ENCODE measurements at regions of chr6 and their contacts with region 1.

Region 1: DNA sequence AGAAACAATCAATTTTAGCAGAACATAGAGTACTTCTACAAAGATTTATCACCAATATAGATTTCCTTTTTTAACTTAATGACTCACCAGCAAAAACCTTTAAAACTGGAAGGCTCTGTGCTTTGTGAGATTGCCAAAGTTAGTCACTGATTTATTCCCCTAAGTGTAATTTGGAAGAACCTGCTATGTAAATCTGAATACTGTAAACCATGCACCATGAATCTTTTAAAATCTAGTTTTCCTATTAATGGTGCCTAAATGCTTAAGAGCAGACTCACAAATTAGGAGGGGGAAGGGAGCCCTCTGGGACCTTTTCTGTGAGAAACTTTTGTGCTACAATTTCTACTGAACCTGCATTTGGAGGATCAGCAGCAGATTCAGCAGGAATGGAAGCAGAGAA is 57.8 kb upstream of the PNRC1 start:
- DNase-seq: no peak

Region 2: DNA sequence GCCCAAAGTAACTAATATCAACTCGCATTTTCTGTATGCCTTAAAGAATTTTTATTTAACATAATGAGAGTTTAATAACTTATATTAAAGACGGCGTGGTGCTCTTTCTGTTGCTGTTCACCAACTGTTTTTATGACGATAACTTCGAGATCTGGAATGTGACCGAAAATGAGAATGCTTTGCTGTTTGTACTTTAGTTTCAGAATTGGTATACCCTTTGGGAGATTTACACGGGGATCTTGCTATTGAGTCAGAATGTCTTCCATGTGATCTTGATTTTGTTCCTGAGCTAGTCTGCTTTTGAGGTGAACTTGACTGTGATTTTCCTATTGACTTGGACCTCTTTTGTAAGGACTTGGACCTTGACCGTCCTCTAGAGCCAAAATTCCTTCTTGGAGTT is 75.7 kb after region 1 on chr6:
- CTCF ChIA-PET with region 1: no interaction called
- POLR2A ChIA-PET with region 1: no interaction called
- DNase-seq: no peak

Region 3: GRCh38 chr6:89138173-89138572 is 115.4 kb after region 1 on chr6:
- CTCF ChIA-PET with region 1: interaction called, 10 read pairs
- POLR2A ChIA-PET with region 1: no interaction called
- DNase-seq: no peak

Measured in HEK293T (cell line).